Head of caudate nucleus (tissue), 42 donors: ENCODE measurements at regions of chrX and their contacts with region 1.

Region 1: DNA sequence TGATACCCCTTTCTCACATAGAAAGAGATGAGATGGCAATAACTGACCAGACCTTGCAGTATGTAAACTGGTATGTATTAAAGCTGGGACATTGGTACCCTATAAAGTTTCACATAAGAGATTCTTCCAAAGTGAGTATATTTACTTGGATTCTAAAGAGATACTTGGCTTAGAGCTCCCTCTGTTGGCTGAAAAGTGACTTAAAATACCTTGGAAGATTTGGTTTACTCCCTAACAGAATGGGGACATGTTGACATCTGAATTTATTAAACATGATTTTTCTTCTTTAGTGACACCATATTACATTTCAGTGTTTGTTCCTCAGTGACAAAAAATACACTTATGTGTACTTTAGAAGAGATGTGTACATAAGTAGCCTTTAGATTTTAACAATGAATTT is 47.9 kb upstream of the RGN start:
- DNase-seq: peak in 13 of 42 donors; percentile 1 to 70 (median 34)

Region 2: GRCh38 chrX:46873746-46874145 is 156.6 kb before region 1 on chrX:
- intact Hi-C with region 1: no loop called
- DNase-seq: no peak

Region 3: DNA sequence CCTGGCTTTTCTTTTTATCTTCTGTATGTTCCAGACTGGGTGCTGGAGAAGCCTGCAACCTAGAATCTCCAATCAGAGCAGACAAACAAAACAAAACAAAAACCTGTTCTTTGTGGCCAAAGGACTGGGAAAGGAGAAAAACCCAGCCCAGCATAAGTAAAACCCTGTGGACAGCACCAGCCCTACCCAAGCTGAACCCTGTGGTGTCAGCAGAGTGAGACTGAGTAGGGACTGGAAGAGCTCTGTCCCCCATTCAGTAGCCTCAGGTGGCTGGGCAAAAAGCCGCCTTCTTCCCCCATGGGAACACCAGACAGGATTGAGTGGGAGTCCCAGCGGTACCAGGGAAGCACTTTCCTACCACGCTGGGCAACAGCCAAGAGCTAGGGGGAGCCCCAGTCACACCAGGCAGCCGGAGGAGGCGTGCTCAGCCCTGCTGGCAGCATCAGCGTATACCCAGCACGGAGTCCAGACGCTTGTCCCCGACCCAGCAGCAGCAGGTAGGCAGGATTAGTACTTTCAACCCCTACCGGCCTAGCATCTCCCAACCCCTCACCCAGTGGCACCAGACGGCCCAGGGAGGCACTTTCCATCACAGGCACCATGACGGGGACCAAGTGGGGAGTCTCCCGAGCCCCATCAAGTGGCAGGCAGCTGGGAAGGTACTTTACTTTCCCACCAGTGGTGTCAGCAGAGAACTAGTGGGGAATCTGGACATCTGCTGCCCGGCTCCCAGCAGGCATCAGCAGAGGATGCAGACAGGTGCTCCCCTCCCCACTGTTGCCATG is 126.7 kb before region 1 on chrX:
- intact Hi-C with region 1: loop called (anchors 2 kb)
- DNase-seq: peak; percentile 66 to 93 (median 84)

Region 4: DNA sequence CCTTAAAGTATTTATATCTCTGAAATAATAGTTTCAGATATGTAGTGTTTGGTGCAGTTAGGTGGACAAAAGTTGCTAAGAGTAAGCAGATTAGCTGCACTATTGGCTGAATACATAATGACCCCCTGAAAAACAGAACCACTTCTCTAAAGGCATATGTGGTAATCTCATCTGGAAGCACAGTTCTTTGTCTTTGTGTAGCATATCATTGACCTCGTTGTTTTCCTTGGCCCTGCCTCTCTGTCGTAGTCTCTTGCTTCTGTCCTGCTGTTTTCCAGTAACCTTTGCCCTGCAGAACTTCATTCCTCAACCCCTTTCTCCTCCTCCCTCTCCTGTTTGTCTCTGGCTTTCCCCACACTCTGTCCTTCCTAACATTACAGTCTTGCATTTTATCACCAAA is 76.7 kb before region 1 on chrX:
- intact Hi-C with region 1: no loop called
- DNase-seq: peak in 1 of 42 donors; percentile 4

Region 5: GRCh38 chrX:47144626-47145394 is 114.5 kb after region 1 on chrX and contains the starts of genes NDUFB11 and RBM10:
- intact Hi-C with region 1: no loop called
- DNase-seq: peak; percentile 80 to 97 (median 92)

Region 6: GRCh38 chrX:47976254-47977151 is 946.2 kb after region 1 on chrX:
- intact Hi-C with region 1: no loop called
- DNase-seq: no peak